Activated naive CD4-positive, alpha-beta T cell treated with anti-CD3 and anti-CD28 coated beads for 36 hours (primary cell): ENCODE measurements at regions of chr20 and their contacts with region 1.

Region 1: GRCh38 chr20:62010551-62011402 is 54.9 kb downstream of the TAF4 start:
- DNase-seq: peak; percentile 75
- H3K4me3 Mint-ChIP-seq: no peak overlapping the region
- H3K27ac Mint-ChIP-seq: peak overlapping the region; percentile 25
- H3K4me1 Mint-ChIP-seq: peaks cover 8% of the 10 kb centered on the region
- H3K27me3 Mint-ChIP-seq: no peaks in the 10 kb centered on the region

Region 2: DNA sequence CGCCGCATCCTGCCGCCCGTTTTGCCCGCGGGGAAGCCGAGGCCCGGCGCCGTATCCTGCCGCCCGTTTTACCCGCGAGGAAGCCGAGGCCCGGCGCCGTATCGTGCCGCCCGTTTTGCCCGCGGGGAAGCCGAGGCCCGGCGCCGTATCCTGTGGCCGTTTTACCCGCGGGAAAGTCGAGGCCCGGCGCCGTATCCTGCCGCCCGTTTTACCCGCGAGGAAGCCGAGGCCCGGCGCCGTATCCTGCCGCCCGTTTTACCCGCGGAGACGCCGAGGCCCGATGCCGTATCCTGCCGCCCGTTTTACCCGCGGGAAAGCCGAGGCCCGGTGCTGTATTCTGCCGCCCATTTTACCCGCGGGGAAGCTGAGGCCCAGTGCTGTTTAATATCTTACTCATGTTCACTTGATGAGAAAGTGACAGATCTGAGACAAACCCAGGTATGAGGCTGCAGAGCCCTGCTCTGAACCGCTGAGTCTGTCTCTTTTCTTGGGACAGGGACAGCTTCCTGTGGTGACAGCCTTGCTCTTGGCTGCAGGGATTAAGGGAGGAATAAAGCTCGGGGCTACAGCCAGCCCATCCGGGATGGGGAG is 1923.1 kb before region 1 on chr20:
- CTCF ChIA-PET with region 1: no interaction called
- intact Hi-C with region 1: no loop called
- DNase-seq: peak; percentile 17
- H3K4me3 Mint-ChIP-seq: peak overlapping the region; percentile 40
- H3K27ac Mint-ChIP-seq: no peak overlapping the region
- H3K4me1 Mint-ChIP-seq: peaks cover 7% of the 10 kb centered on the region
- H3K27me3 Mint-ChIP-seq: peaks cover 36% of the 10 kb centered on the region

Region 3: DNA sequence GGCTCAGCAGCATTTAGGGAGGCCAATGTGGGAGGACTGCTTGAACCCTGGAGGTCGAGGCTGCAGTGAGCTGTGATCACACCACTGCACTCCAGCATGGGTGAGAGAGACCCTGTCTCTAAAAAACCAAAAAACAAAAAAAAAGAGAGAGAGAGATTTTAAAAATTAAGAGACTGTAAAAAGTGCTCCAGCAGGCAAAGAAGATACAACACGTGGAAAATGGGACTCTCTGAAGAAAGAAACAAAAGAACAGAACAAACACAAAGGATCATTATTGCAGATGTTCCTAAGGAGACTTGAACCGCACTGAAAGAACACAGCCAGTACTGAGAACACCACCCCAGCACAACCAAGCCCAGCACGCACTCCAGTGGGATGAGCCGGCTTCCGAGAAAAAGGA is 19.3 kb before region 1 on chr20:
- CTCF ChIA-PET with region 1: no interaction called
- intact Hi-C with region 1: no loop called
- DNase-seq: no peak
- H3K4me3 Mint-ChIP-seq: no peak overlapping the region
- H3K27ac Mint-ChIP-seq: no peak overlapping the region
- H3K4me1 Mint-ChIP-seq: peaks cover under 1% of the 10 kb centered on the region
- H3K27me3 Mint-ChIP-seq: no peaks in the 10 kb centered on the region

Region 4: GRCh38 chr20:62052842-62053464 is 42.2 kb after region 1 on chr20:
- CTCF ChIA-PET with region 1: no interaction called
- intact Hi-C with region 1: no loop called
- DNase-seq: no peak
- H3K4me3 Mint-ChIP-seq: no peak overlapping the region
- H3K27ac Mint-ChIP-seq: no peak overlapping the region
- H3K4me1 Mint-ChIP-seq: peaks cover 49% of the 10 kb centered on the region
- H3K27me3 Mint-ChIP-seq: no peaks in the 10 kb centered on the region

Region 5: GRCh38 chr20:62136283-62137091 is 125.7 kb after region 1 on chr20:
- CTCF ChIA-PET with region 1: interaction called, 27 read pairs
- intact Hi-C with region 1: loop called (anchors 1 kb)
- DNase-seq: peak; percentile 80
- H3K4me3 Mint-ChIP-seq: no peak overlapping the region
- H3K27ac Mint-ChIP-seq: peak overlapping the region; percentile 71
- H3K4me1 Mint-ChIP-seq: peaks cover 47% of the 10 kb centered on the region
- H3K27me3 Mint-ChIP-seq: no peaks in the 10 kb centered on the region

Region 6: DNA sequence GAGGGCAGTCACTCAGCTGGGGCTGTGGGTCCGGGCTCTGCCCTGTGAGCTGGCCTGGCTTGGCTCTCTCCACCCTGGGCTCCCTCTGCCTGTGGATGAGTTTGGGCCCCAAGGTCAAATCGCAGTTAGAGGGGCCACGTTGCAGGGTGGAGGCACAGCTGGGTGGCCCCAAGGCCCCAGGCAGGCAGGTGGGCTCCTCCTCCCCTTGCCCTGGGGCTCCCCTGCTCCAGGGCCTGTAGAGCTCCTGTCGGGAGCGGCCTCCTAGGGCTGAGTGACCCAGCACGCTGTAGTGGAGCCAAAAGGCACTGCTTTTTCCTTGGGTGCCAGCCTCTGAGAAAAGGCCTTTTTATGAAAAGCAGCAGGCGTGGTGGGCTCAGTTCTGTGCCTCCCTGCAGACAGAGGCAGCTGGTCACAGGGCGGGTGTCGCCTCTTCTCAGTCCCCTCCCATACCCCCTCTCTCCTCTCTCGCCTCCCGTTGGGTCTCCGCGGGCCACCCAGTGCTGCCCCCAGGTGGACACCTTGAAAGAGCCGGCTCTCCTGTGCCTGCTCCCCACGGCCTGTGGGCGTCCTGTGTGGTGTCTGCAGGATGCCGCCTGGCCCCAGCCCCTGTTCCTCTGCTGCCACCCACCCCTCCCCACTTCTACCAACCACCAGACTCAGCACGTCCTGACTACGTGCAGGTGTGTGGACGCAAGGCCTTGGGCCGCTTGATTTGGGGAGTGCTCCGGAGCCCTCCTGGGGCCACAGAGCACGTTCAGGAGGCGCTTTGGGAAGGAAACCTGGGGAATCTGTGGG is 146.0 kb after region 1 on chr20:
- CTCF ChIA-PET with region 1: interaction called, 9 read pairs
- intact Hi-C with region 1: loop called (anchors 2 kb)
- DNase-seq: peak; percentile 75
- H3K4me3 Mint-ChIP-seq: no peak overlapping the region
- H3K27ac Mint-ChIP-seq: no peak overlapping the region
- H3K4me1 Mint-ChIP-seq: peaks cover 10% of the 10 kb centered on the region
- H3K27me3 Mint-ChIP-seq: no peaks in the 10 kb centered on the region